CD4-positive, alpha-beta memory T cell (primary cell): ENCODE measurements at regions of chr20 and their contacts with region 1.

Region 1: DNA sequence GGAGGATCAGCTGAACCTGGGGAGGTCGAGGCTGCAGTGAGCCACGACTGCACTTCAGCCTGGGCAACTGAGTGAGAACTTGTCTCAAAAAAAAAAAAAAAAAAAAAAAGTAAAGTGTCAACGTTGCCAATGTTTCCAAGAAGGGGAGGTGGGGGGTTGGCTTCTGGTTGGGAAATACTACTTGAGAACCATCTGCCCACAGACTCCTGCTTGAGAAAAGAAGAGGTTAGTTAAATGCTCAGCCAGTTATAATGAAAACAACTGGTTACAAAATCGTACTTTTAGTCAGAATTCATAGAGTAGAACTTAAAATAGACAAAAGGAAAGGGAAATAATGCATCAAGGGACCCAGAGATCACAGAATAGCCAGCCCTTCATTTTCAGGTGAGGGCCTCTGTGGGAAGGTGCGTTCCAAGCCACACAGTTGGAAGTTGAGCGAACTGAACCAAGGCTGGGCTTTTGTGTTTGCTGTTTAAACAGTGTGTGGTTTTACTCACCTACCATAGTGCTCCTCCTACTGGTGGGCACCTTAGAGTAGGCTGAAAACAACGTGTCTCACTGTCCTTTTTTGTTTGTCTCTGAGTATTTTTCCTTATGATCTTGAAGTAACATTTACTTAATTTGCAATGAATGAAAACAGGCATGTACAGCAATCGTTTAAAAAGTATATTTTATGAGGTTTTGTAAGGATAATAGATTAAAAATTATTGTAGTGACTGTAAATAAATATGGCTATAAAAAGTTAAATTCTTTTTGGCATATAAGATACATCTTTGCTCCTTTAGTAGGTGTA is 200.7 kb downstream of the BCAS1 start:
- DNase-seq: peak; percentile 73 to 81 (median 77)
- H3K4me3 ChIP-seq: peak overlapping the region in 1 of 2 donors; percentile 15
- H3K4me3 Mint-ChIP-seq: peak overlapping the region in 7 of 8 donors; percentile 30 to 81 (median 66)
- H3K27ac ChIP-seq: peak overlapping the region; percentile 47
- H3K27ac Mint-ChIP-seq: peak overlapping the region; percentile 73 to 97 (median 93)
- H3K4me1 ChIP-seq: peaks cover 89% of the 10 kb centered on the region
- H3K4me1 Mint-ChIP-seq: peaks cover 57 to 90% (median 69%) of the 10 kb centered on the region in 4 donors
- H3K27me3 ChIP-seq: no peaks in the 10 kb centered on the region
- H3K27me3 Mint-ChIP-seq: peaks cover 0 to 2% of the 10 kb centered on the region in 2 donors

Region 2: DNA sequence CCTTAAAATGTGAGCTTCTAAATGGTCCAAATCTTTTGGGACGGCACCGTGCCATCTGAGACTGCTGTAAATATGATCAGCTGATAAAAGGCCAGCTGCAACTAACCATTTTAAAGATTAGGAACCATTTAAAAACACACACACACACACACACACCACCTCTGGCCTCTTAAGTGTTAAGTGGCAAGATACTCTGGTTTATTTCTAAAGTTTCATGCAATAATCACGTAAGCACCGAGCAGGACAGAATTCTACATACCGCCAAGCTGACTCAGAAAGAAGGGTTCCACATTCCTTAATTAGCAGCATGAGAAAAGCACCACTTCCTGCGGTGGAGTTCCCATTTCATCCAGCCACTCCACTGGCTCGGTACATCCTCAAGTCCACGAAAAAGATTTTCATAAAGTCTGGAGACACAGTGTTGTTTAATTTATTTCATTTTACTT is 258.2 kb before region 1 on chr20:
- CTCF ChIA-PET with region 1: interaction called, 3 read pairs
- POLR2A ChIA-PET with region 1: interaction called, 22 read pairs
- intact Hi-C with region 1: no loop called
- DNase-seq: no peak
- H3K4me3 ChIP-seq: no peak overlapping the region
- H3K4me3 Mint-ChIP-seq: no peak overlapping the region
- H3K27ac ChIP-seq: no peak overlapping the region
- H3K27ac Mint-ChIP-seq: peak overlapping the region in 2 of 7 donors; percentile 13 to 73
- H3K4me1 ChIP-seq: peaks cover 33% of the 10 kb centered on the region
- H3K4me1 Mint-ChIP-seq: peaks cover 13 to 28% (median 22%) of the 10 kb centered on the region in 4 donors
- H3K27me3 ChIP-seq: no peaks in the 10 kb centered on the region
- H3K27me3 Mint-ChIP-seq: no peaks in the 10 kb centered on the region

Region 3: GRCh38 chr20:53660078-53660909 is 209.4 kb before region 1 on chr20:
- CTCF ChIA-PET with region 1: interaction called, 3 read pairs
- POLR2A ChIA-PET with region 1: interaction called, 10 read pairs
- intact Hi-C with region 1: loop called (anchors 5 kb)
- DNase-seq: peak in 2 of 5 donors; percentile 16 to 18
- H3K4me3 ChIP-seq: peak overlapping the region; percentile 56 to 66
- H3K4me3 Mint-ChIP-seq: peak overlapping the region; percentile 77 to 91 (median 88)
- H3K27ac ChIP-seq: peak overlapping the region; percentile 41
- H3K27ac Mint-ChIP-seq: peak overlapping the region; percentile 63 to 93 (median 89)
- H3K4me1 ChIP-seq: peaks cover 46% of the 10 kb centered on the region
- H3K4me1 Mint-ChIP-seq: peaks cover 36 to 70% (median 50%) of the 10 kb centered on the region in 4 donors
- H3K27me3 ChIP-seq: no peaks in the 10 kb centered on the region
- H3K27me3 Mint-ChIP-seq: no peaks in the 10 kb centered on the region

Region 4: DNA sequence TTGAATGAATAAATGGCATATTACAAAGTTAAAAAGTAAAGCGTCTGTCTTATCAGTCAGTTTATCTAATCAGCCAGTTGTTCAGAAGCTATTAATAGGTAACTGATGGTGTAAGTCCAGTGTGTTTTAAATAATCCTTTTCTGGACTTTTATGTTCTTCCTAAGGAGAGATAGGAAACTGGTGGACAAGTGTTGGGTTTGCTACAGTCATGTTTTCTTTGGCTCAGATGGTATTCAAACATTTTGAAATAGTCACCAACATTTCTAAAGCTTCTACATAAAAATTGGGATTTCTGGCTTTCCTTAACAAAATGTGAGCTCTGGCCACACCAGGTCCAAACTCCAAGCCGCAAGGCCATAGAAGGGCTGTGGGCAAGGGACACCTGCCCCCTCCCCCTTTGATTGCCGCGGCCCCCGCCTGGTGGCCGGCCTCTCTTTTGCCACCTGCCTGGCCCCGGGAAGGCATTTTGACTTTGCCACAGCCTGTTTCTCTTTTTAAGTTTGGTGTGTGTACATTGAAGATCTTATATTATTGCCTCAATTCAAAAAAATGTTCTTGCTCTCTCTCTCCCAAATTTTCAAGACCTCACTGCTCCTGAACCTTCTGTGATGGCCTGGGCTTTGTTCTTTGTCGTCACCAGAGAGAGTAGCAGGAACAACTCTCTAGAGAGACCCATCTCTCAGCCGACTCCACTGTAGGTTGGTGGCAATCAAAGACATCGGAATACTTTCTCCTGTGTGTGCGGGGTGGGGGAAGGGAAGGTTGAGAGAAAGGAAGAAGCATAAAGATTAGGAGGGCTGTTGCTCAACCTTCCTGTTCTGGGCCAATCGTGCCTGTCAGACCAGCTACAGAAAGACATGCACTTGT is 192.0 kb before region 1 on chr20:
- CTCF ChIA-PET with region 1: no interaction called
- POLR2A ChIA-PET with region 1: no interaction called
- intact Hi-C with region 1: no loop called
- DNase-seq: no peak
- H3K4me3 ChIP-seq: no peak overlapping the region
- H3K4me3 Mint-ChIP-seq: peak overlapping the region in 3 of 8 donors; percentile 36 to 68 (median 65)
- H3K27ac ChIP-seq: no peak overlapping the region
- H3K27ac Mint-ChIP-seq: peak overlapping the region in 4 of 7 donors; percentile 44 to 57 (median 47)
- H3K4me1 ChIP-seq: peaks cover 6% of the 10 kb centered on the region
- H3K4me1 Mint-ChIP-seq: peaks cover 5 to 13% (median 9%) of the 10 kb centered on the region in 4 donors
- H3K27me3 ChIP-seq: no peaks in the 10 kb centered on the region
- H3K27me3 Mint-ChIP-seq: no peaks in the 10 kb centered on the region

Region 5: GRCh38 chr20:53750827-53751619 is 118.6 kb before region 1 on chr20:
- CTCF ChIA-PET with region 1: interaction called, 5 read pairs
- POLR2A ChIA-PET with region 1: interaction called, 8 read pairs
- intact Hi-C with region 1: loop called (anchors 2 kb)
- DNase-seq: peak in 4 of 5 donors; percentile 28 to 54 (median 40)
- H3K4me3 ChIP-seq: no peak overlapping the region
- H3K4me3 Mint-ChIP-seq: peak overlapping the region in 7 of 8 donors; percentile 52 to 82 (median 76)
- H3K27ac ChIP-seq: peak overlapping the region; percentile 55
- H3K27ac Mint-ChIP-seq: peak overlapping the region; percentile 86 to 98 (median 95)
- H3K4me1 ChIP-seq: peaks cover 63% of the 10 kb centered on the region
- H3K4me1 Mint-ChIP-seq: peaks cover 48 to 72% (median 63%) of the 10 kb centered on the region in 4 donors
- H3K27me3 ChIP-seq: no peaks in the 10 kb centered on the region
- H3K27me3 Mint-ChIP-seq: no peaks in the 10 kb centered on the region

Region 6: DNA sequence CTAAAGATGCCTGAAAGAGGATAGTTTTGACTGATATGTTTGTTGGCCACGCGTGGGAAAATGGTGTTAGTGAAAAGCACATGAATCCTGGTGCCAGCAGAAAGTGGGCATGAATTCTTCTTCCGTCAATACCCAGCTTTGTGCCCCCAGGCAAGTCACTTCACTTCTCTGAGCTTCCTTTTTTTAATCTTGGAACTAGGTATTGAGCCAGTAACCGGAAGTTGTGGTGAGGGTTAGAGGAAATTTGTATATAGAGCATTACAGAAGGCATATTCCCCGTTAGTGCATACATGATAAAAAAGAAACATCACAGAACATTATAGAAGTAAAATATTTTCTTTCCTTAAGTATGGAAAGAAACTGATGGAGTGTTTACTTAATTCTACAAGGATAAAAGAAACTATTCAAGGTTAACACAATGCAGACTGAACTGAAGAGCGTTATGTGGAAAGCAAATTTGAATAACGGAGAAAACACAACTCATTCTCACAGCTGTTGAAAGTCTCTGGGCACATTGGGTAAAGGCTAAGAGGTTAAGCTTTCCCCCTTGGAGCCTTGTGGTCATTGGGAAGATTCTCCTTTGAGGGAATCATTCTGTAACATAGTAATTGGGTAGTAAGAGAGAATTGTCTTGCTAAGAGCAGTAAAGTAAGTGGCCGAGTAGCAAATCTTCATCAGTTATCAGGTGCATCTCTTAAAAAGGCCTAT is 22.4 kb before region 1 on chr20:
- CTCF ChIA-PET with region 1: interaction called, 7 read pairs
- POLR2A ChIA-PET with region 1: interaction called, 20 read pairs
- intact Hi-C with region 1: loop called (anchors 1 kb)
- DNase-seq: peak in 3 of 5 donors; percentile 31 to 42 (median 34)
- H3K4me3 ChIP-seq: no peak overlapping the region
- H3K4me3 Mint-ChIP-seq: peak overlapping the region; percentile 64 to 88 (median 81)
- H3K27ac ChIP-seq: no peak overlapping the region
- H3K27ac Mint-ChIP-seq: peak overlapping the region; percentile 83 to 90 (median 87)
- H3K4me1 ChIP-seq: peaks cover 63% of the 10 kb centered on the region
- H3K4me1 Mint-ChIP-seq: peaks cover 47 to 63% (median 56%) of the 10 kb centered on the region in 4 donors
- H3K27me3 ChIP-seq: no peaks in the 10 kb centered on the region
- H3K27me3 Mint-ChIP-seq: no peaks in the 10 kb centered on the region

Region 7: GRCh38 chr20:53939572-53940359 is 70.1 kb after region 1 on chr20:
- CTCF ChIA-PET with region 1: interaction called, 11 read pairs
- POLR2A ChIA-PET with region 1: interaction called, 3 read pairs
- intact Hi-C with region 1: no loop called
- DNase-seq: peak; percentile 50 to 60 (median 52)
- H3K4me3 ChIP-seq: no peak overlapping the region
- H3K4me3 Mint-ChIP-seq: no peak overlapping the region
- H3K27ac ChIP-seq: no peak overlapping the region
- H3K27ac Mint-ChIP-seq: peak overlapping the region in 3 of 7 donors; percentile 3 to 77 (median 18)
- H3K4me1 ChIP-seq: peaks cover 21% of the 10 kb centered on the region
- H3K4me1 Mint-ChIP-seq: peaks cover 14 to 43% (median 24%) of the 10 kb centered on the region in 4 donors
- H3K27me3 ChIP-seq: no peaks in the 10 kb centered on the region
- H3K27me3 Mint-ChIP-seq: no peaks in the 10 kb centered on the region